Esophagus muscularis mucosa (tissue), 4 donors: ENCODE measurements at regions of chr21 and their contacts with region 1.

Region 1: DNA sequence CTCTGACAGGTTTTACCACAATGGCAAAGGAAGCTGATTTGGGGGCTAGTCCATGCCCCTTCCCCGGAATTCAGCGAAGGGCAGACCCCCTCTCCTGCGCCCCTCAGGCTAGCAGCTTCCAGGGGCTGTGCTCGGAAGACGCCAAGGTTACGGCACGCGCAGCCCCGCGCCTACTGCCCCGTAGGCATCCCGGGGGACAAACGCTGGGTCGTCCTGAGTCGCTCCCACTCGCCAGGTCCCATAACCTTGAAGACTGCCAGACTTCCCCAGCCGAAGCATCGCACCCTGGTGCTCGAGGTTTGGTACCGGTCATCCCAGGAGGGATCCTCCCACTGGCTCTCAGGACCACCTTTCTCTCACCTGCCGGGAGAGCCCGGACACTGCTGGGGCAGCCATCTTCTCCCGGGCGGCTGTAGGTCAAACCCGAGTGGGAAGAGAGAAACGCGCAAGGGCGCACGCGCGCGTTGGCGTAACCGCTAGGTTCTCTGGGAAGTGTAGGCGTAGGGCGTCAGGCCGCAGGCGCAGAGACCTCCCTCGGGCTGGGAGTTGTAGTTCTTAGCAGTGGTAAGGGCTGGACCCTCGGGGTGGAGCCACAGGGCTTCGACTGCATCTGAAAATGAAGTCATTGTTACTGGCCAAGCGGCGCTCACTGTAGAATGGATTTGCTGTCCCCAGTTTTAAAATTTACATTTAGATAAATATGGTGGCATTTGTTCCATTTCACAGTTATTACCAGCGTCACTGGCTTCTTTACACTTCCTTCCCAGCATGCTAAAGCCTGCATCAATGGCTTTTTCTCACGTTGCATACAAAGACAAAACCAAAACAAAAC is at the start of gene ATP5PO:
- DNase-seq: peak; percentile 99
- H3K4me3 ChIP-seq: peak within 1 kb of the TSS; percentile 61 to 94 (median 88)
- H3K27ac ChIP-seq: peak within 1 kb of the TSS; percentile 81 to 93 (median 86)
- H3K4me1 ChIP-seq: peaks cover 23 to 30% (median 26%) of the 10 kb centered on the region in 4 donors
- H3K27me3 ChIP-seq: no peaks in the 10 kb centered on the region
- CTCF ChIP-seq: peak in 1 of 3 experiments; percentile 35
- EP300 ChIP-seq: no peak
- POLR2A ChIP-seq: peak; percentile 77
- total RNA-seq, gene ATP5PO: 130 to 289 (median 195) TPM

Region 2: GRCh38 chr21:34614633-34615486 is 699.3 kb after region 1 on chr21 and contains the start of gene RCAN1:
- intact Hi-C with region 1: loop called (anchors 10 kb)
- DNase-seq: peak; percentile 97
- H3K4me3 ChIP-seq: peak within 1 kb of the TSS; percentile 80 to 97 (median 86)
- H3K27ac ChIP-seq: peak within 1 kb of the TSS; percentile 89 to 95 (median 92)
- H3K4me1 ChIP-seq: peaks cover 26 to 45% (median 38%) of the 10 kb centered on the region in 4 donors
- H3K27me3 ChIP-seq: no peaks in the 10 kb centered on the region
- CTCF ChIP-seq: no peak
- EP300 ChIP-seq: no peak
- POLR2A ChIP-seq: no peak
- total RNA-seq, gene RCAN1: 32.4 to 58.8 (median 37.9) TPM